ENCODE measurements at regions of chr2 and their contacts with region 1.

Region 1: GRCh38 chr2:47386551-47386950 is 16.4 kb upstream of the MSH2 start:
- DNase-seq: no peak
- H3K4me3 ChIP-seq: no peak overlapping the region
- H3K27ac ChIP-seq: no peak overlapping the region
- H3K4me1 ChIP-seq: no peaks in the 10 kb centered on the region
- H3K27me3 ChIP-seq: no peaks in the 10 kb centered on the region
- CTCF ChIP-seq: no peak

Region 2: DNA sequence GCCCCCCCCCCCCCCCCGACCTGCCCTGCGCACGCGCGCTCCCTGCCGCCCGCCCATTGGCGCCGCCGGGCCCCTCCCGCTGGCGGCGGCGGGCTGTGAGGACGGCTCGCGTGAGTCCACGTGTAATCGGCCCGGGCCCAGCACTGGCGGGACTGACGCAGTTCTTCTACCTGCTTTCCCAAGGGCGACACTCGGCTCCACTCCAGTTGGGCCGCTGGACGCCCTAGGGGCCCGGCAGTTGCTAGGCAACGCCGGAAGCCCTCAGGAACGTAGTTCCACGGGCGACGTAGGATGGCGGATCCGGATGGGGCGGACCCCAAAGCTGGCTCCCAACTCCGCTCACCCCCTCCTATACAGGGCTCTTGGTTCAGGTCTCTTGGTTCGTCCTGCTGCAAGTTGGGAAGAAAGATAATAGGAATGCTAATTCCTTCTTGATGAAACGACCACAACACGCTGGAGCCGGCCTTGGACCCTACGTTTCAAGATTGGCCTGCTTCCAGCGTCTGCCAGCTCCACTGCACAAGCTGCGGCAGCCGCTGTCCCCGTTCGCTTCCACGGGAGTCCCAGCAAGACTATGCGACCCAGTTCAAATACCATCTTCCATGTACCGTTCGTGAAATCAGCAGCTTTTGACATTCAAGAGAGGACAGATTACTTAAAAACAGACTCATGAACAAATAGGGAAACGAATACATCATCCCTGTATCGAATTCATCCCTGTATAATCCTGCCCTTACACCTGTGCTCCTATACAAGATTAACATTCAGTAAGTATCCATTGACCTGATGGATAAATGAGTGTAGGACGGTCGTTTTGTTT is 470.5 kb before region 1 on chr2:
- CTCF ChIA-PET with region 1: interaction called, 4 read pairs
- POLR2A ChIA-PET with region 1: no interaction called
- intact Hi-C with region 1: loop called (anchors 10 kb)
- DNase-seq: peak; percentile 93
- H3K4me3 ChIP-seq: peak overlapping the region; percentile 76
- H3K27ac ChIP-seq: peak overlapping the region; percentile 75
- H3K4me1 ChIP-seq: peaks cover 60% of the 10 kb centered on the region
- H3K27me3 ChIP-seq: no peaks in the 10 kb centered on the region
- CTCF ChIP-seq: no peak

Region 3: DNA sequence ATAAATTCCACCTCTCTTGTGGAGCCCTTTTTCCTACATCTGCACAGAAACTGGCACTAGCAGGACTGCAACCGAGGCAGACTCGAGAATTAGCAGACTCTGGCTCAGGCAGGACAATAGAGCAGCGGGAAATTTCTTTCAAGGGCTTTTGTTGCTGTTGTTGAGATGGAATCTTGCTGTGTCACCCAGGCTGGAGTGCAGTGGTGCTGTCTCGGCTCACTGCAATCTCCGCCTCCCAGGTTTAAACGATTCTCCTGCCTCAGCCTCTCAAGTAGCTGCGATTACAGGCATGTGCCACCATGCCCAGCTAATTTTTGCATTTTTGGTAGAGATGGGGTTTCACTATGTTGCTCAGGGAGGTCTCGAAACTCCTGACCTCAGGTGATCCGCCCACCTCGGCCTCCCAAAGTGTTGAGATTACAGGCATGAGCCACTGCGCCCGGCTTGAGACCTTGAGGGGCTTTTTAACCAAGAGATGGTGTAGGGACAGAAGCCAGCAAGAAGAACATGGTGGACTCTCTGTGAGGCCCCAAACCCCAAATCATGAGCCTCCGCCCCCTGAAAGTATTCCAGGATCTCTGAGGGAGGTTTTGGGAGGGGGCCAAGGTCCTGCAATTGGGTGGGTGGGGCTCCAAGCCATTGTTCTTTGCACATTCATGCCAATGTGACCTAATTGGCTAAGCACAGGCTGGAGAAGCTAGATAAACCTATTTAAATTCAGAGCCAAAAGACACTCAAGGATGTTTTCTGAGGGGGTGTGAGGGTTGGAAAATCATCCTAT is 52.0 kb before region 1 on chr2:
- CTCF ChIA-PET with region 1: interaction called, 86 read pairs
- POLR2A ChIA-PET with region 1: interaction called, 13 read pairs
- intact Hi-C with region 1: loop called (anchors 1 kb)
- DNase-seq: no peak
- H3K4me3 ChIP-seq: no peak overlapping the region
- H3K27ac ChIP-seq: no peak overlapping the region
- H3K4me1 ChIP-seq: peaks cover 13% of the 10 kb centered on the region
- H3K27me3 ChIP-seq: no peaks in the 10 kb centered on the region
- CTCF ChIP-seq: no peak

Region 4: GRCh38 chr2:47339745-47340541 is 46.6 kb before region 1 on chr2:
- CTCF ChIA-PET with region 1: interaction called, 86 read pairs
- POLR2A ChIA-PET with region 1: interaction called, 13 read pairs
- intact Hi-C with region 1: loop called (anchors 1 kb)
- DNase-seq: peak; percentile 81 to 100
- H3K4me3 ChIP-seq: peak overlapping the region; percentile 33; the same call in 1 of the 2 replicates
- H3K27ac ChIP-seq: peak overlapping the region; percentile 84
- H3K4me1 ChIP-seq: peaks cover 56% of the 10 kb centered on the region
- H3K27me3 ChIP-seq: no peaks in the 10 kb centered on the region
- CTCF ChIP-seq: no peak

Region 5: DNA sequence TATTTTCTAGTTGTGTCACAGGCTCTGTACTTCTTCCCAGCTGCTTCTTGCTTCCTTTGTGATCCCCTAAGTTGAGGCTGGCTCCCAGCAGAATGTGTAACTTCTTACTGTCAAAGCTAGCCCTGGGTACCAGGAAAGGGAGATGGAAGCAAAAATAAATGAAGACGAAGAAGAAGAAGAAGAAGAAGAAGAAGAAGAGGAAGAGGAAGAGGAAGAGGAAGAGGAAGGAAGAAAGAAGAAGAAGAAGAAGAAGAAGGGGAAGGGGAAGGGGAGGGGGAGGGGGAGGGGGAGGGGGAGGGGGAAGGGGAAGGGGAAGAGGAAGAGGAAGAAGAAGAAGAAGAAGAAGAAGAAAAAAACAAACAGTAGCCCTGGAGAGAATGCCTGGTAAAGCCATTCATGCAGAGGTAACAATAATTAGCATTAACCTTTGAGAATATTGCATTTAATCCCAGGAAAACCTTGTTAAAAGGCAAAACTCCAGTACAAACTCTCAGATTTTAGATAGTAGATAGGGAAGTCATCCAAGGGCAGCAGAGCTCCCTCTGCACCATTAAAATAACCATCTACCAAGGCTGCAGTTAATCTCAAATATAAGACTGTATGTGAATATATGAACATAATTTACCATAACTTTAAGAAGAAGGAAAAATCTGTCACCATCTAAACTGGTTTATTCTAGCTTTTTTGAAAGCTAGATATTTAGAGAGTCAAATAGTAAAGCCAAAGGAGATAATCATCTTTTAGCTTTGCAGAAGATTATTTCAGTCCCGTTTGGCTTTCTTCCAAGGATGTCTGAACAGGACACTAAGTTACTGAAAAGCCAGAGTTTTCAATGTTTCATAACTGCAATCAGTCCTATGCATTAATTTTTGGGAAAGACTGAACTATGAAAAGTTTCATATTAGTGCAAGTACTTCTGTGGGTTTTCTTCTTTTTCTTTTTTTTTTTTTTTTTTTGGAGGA is 564.1 kb after region 1 on chr2:
- CTCF ChIA-PET with region 1: interaction called, 11 read pairs
- POLR2A ChIA-PET with region 1: no interaction called
- intact Hi-C with region 1: no loop called
- DNase-seq: no peak
- H3K4me3 ChIP-seq: no peak overlapping the region
- H3K27ac ChIP-seq: no peak overlapping the region
- H3K4me1 ChIP-seq: no peaks in the 10 kb centered on the region
- H3K27me3 ChIP-seq: no peaks in the 10 kb centered on the region
- CTCF ChIP-seq: no peak

Measured in PC-9 (cell line).